ENCODE measurements at regions of chr19 and their contacts with region 1.

Region 1: DNA sequence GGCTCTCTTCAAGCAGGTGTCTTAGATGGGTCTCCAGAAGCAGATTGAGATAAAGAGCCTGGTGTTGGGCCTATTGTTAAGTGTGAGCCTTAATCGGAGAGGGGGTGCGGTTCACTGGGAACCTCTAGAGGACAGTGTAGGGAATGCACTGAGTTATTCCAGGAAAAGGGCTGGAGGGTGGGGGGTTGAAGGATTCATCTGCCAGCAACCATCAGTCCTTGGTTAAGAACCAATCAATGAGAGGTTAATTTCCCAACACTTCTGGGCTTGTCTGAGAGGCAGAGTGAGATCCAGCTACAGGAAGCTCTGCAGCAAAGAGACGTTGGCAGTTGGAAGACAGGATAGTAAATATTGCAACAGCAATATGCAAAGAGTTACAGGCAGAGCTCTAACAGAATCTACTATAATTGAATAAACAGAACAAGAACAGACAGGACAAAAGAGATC is 28.7 kb downstream of the CYP4F2 start:
- DNase-seq: peak in 4 of 5 donors; percentile 26 to 49 (median 36)
- H3K4me3 ChIP-seq: no peak overlapping the region
- H3K4me3 Mint-ChIP-seq: no peak overlapping the region
- H3K27ac ChIP-seq: no peak overlapping the region
- H3K27ac Mint-ChIP-seq: peak overlapping the region in 3 of 7 donors; percentile 17 to 77 (median 60)
- H3K4me1 ChIP-seq: peaks cover 7% of the 10 kb centered on the region
- H3K4me1 Mint-ChIP-seq: peaks cover 4 to 19% (median 6%) of the 10 kb centered on the region in 4 donors
- H3K27me3 ChIP-seq: no peaks in the 10 kb centered on the region
- H3K27me3 Mint-ChIP-seq: peaks cover 4 to 18% of the 10 kb centered on the region in 2 donors

Region 2: GRCh38 chr19:15584541-15585115 is 284.5 kb before region 1 on chr19:
- CTCF ChIA-PET with region 1: no interaction called
- POLR2A ChIA-PET with region 1: interaction called, 3 read pairs
- intact Hi-C with region 1: loop called (anchors 1 kb)
- DNase-seq: peak; percentile 68 to 78 (median 72)
- H3K4me3 ChIP-seq: no peak overlapping the region
- H3K4me3 Mint-ChIP-seq: peak overlapping the region in 5 of 8 donors; percentile 21 to 69 (median 52)
- H3K27ac ChIP-seq: no peak overlapping the region
- H3K27ac Mint-ChIP-seq: peak overlapping the region in 1 of 7 donors; percentile 48
- H3K4me1 ChIP-seq: peaks cover 7% of the 10 kb centered on the region
- H3K4me1 Mint-ChIP-seq: peaks cover 0 to 13% (median 4%) of the 10 kb centered on the region in 4 donors
- H3K27me3 ChIP-seq: no peaks in the 10 kb centered on the region
- H3K27me3 Mint-ChIP-seq: peaks cover 7 to 9% of the 10 kb centered on the region in 2 donors

Region 3: DNA sequence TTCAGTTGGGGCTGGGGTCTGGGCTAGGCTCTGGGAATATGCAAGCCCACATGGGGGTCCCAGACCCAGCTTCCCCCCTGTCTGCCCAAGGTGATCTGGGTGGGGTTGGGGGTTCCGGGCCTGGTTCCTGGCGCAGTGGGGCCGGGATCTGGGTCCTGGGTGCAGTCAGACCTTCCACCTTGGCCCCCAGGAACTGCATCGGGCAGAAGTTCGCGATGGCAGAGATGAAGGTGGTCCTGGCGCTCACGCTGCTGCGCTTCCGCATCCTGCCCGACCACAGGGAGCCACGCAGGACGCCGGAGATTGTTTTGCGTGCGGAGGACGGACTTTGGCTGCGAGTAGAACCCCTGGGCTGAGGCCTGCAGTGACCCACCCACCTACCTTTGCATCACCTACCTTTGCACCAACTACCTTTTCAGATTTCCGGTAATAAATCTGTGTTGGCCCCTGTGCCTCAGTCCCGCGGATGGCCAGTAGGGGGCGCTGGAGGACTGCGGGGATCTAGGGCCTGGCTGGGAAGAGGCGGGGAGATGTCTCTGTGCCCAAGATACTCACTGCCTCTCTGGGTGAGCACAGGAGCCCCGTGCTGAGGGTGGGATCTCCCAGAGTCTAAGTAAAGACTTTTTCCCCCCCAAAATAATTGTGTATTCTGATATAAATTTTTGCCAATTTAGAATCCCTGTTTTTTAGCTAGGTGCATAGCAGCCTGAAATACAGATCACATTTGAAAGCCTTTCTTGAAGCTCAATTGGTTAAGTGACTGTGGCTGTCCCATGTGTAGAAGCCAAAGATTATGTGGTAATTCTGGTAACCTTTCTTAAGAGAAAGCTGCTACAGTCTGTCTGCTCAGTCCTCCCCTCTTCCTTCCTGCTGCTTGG is 239.9 kb before region 1 on chr19:
- CTCF ChIA-PET with region 1: interaction called, 11 read pairs
- POLR2A ChIA-PET with region 1: no interaction called
- intact Hi-C with region 1: loop called (anchors 1 kb)
- DNase-seq: peak; percentile 80 to 86 (median 81)
- H3K4me3 ChIP-seq: no peak overlapping the region
- H3K4me3 Mint-ChIP-seq: no peak overlapping the region
- H3K27ac ChIP-seq: no peak overlapping the region
- H3K27ac Mint-ChIP-seq: no peak overlapping the region
- H3K4me1 ChIP-seq: peaks cover 14% of the 10 kb centered on the region
- H3K4me1 Mint-ChIP-seq: peaks cover 2 to 13% (median 9%) of the 10 kb centered on the region in 4 donors
- H3K27me3 ChIP-seq: no peaks in the 10 kb centered on the region
- H3K27me3 Mint-ChIP-seq: peaks cover 3 to 14% of the 10 kb centered on the region in 2 donors

Region 4: DNA sequence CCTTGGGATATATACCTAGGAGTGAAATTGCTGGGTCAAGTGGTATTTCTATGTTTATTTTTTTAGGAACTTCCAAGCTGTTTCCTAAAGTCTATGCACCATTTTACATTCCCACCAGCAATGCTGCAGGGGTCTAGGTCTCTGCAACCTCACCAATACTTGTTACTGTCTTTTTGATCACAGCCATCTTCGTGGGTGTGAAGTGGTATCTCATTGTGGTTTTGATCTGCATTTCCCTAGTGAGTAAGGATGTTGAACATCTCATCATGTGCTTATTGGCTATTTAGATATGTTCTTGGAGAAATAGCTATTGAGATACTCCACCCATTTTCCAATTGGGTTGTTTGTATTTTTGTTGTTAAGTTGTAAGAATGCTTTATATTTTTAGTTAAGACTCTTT is 138.6 kb before region 1 on chr19:
- CTCF ChIA-PET with region 1: no interaction called
- POLR2A ChIA-PET with region 1: no interaction called
- intact Hi-C with region 1: no loop called
- DNase-seq: no peak
- H3K4me3 ChIP-seq: no peak overlapping the region
- H3K4me3 Mint-ChIP-seq: no peak overlapping the region
- H3K27ac ChIP-seq: no peak overlapping the region
- H3K27ac Mint-ChIP-seq: no peak overlapping the region
- H3K4me1 ChIP-seq: no peaks in the 10 kb centered on the region
- H3K4me1 Mint-ChIP-seq: peaks cover 4 to 7% (median 5%) of the 10 kb centered on the region in 4 donors
- H3K27me3 ChIP-seq: no peaks in the 10 kb centered on the region
- H3K27me3 Mint-ChIP-seq: peaks cover 20 to 21% of the 10 kb centered on the region in 2 donors

Region 5: DNA sequence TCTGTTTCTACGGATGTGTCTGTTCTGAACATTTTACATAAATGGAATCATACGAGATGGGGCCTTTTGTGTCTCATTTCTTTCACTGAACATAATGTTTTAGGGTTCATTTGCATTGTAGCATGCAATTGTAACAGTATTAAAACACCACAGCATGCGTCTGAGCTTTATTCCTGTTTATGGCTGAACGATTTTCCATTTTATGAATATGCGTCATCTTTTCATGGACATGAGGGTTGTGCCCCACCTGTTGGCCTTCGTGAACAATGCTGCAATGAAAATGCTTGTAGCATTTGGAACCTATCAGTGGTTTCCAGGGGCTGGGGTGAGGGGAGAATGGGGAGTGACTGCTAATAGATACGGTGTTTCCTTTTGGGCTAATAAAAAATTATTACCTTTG is 58.8 kb before region 1 on chr19:
- CTCF ChIA-PET with region 1: interaction called, 33 read pairs
- POLR2A ChIA-PET with region 1: no interaction called
- intact Hi-C with region 1: loop called (anchors 1 kb)
- DNase-seq: no peak
- H3K4me3 ChIP-seq: no peak overlapping the region
- H3K4me3 Mint-ChIP-seq: no peak overlapping the region
- H3K27ac ChIP-seq: no peak overlapping the region
- H3K27ac Mint-ChIP-seq: no peak overlapping the region
- H3K4me1 ChIP-seq: peaks cover 11% of the 10 kb centered on the region
- H3K4me1 Mint-ChIP-seq: peaks cover 6 to 24% (median 14%) of the 10 kb centered on the region in 4 donors
- H3K27me3 ChIP-seq: no peaks in the 10 kb centered on the region
- H3K27me3 Mint-ChIP-seq: peaks cover 8 to 22% of the 10 kb centered on the region in 2 donors

Region 6: GRCh38 chr19:15836595-15837337 is 32.4 kb before region 1 on chr19:
- CTCF ChIA-PET with region 1: interaction called, 8 read pairs
- POLR2A ChIA-PET with region 1: interaction called, 5 read pairs
- intact Hi-C with region 1: loop called (anchors 2 kb)
- DNase-seq: peak; percentile 95 to 98 (median 96)
- H3K4me3 ChIP-seq: peak overlapping the region; percentile 63 to 69
- H3K4me3 Mint-ChIP-seq: peak overlapping the region; percentile 92 to 99 (median 96)
- H3K27ac ChIP-seq: peak overlapping the region; percentile 94
- H3K27ac Mint-ChIP-seq: peak overlapping the region; percentile 89 to 100 (median 98)
- H3K4me1 ChIP-seq: peaks cover 29% of the 10 kb centered on the region
- H3K4me1 Mint-ChIP-seq: peaks cover 17 to 36% (median 26%) of the 10 kb centered on the region in 4 donors
- H3K27me3 ChIP-seq: no peaks in the 10 kb centered on the region
- H3K27me3 Mint-ChIP-seq: no peaks in the 10 kb centered on the region

Region 7: DNA sequence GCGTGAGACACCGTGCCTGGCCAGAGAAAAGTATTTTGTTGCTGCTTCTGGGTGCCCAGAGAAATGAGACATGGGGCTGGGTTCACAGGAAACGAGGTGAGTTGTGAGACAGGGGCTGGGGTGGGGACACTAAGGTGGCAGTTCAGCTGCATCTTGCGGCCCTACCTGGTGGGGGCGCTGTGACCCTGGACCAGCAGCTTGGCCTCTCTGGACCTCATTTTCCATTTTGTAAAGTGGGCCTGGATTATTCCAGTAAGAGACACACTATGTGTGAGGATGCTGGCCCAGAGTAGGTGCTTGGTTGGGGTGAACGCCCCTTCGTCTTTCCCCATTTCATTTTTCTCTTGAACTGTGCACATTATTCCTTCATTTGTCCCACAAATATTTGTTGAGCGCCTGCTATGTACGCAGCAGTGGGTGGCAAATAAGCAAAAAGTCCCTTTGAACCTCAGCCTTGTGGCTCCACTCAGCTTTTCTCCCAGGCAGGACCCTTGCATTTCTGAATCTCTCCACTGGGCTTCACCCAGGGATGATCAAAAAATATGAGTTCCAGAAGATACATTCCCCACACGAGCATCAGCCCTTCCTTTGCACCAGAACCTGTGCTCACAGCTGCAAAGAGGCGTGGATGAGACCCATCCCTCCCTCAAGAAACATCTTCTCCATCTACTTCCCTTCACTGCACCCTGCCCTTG is 27.1 kb before region 1 on chr19:
- CTCF ChIA-PET with region 1: interaction called, 13 read pairs
- POLR2A ChIA-PET with region 1: interaction called, 5 read pairs
- intact Hi-C with region 1: loop called (anchors 2 kb)
- DNase-seq: peak in 1 of 5 donors; percentile 8
- H3K4me3 ChIP-seq: no peak overlapping the region
- H3K4me3 Mint-ChIP-seq: peak overlapping the region in 1 of 8 donors; percentile 1
- H3K27ac ChIP-seq: no peak overlapping the region
- H3K27ac Mint-ChIP-seq: no peak overlapping the region
- H3K4me1 ChIP-seq: peaks cover 63% of the 10 kb centered on the region
- H3K4me1 Mint-ChIP-seq: peaks cover 34 to 70% (median 54%) of the 10 kb centered on the region in 4 donors
- H3K27me3 ChIP-seq: no peaks in the 10 kb centered on the region
- H3K27me3 Mint-ChIP-seq: no peaks in the 10 kb centered on the region

Measured in CD4-positive, alpha-beta memory T cell (primary cell).